Activated CD8-positive, alpha-beta T cell treated with anti-CD3 and anti-CD28 coated beads for 36 hours (primary cell): ENCODE measurements at regions of chr19 and their contacts with region 1.

Region 1: DNA sequence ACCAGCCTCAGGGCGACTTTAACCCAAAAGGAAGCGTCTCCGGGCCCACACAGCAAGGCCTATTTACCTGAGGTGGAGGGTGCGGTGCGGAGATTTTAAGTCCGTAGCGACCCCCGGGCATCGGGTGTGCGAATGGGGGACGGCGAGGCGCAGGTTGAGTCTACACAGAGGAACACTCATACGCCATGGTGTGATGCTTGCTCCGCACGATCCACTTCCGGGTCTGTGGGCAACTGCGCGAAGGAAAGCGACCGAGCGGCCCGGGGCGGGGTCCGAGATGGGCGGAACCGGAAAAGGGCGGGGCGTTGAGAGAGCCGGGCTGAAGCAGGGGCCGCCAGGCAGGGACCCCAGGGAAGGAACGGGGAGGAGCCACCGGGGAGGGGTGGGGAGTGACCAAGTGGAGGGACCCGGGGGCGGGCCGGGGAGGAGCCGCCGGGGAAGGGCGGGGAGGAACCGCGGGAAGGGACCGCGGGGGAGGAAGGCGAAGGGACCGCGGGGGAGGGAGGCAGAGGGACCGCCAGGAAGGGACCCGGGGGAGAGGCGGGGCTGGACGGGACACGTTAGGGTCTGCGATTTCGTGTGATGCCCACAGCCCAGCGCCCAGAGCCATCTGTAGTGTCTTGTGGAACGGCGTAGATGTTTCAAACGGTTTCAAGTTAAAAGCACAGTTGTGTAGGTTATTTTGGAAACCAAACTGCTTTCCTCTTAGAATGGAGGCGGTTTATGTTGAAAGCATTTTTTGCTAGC is at the start of gene ZNF160:
- DNase-seq: peak; percentile 99
- ATAC-seq: peak; percentile 97
- H3K4me3 Mint-ChIP-seq: peak within 1 kb of the TSS; percentile 92
- H3K27ac Mint-ChIP-seq: peak within 1 kb of the TSS; percentile 93
- H3K4me1 Mint-ChIP-seq: peaks cover 27% of the 10 kb centered on the region
- H3K27me3 Mint-ChIP-seq: no peaks in the 10 kb centered on the region
- CTCF ChIP-seq: no peak
- total RNA-seq, gene ZNF160: 48.0 to 50.0 TPM

Region 2: GRCh38 chr19:53045546-53045945 is 57.8 kb before region 1 on chr19:
- CTCF ChIA-PET with region 1: no interaction called
- POLR2A ChIA-PET with region 1: no interaction called
- intact Hi-C with region 1: no loop called
- DNase-seq: no peak
- ATAC-seq: no peak
- H3K4me3 Mint-ChIP-seq: no peak overlapping the region
- H3K27ac Mint-ChIP-seq: no peak overlapping the region
- H3K4me1 Mint-ChIP-seq: no peaks in the 10 kb centered on the region
- H3K27me3 Mint-ChIP-seq: peaks cover 2% of the 10 kb centered on the region
- CTCF ChIP-seq: no peak

Region 3: GRCh38 chr19:53092727-53093126 is 10.6 kb before region 1 on chr19:
- CTCF ChIA-PET with region 1: no interaction called
- POLR2A ChIA-PET with region 1: no interaction called
- intact Hi-C with region 1: no loop called
- DNase-seq: no peak
- ATAC-seq: no peak
- H3K4me3 Mint-ChIP-seq: no peak overlapping the region
- H3K27ac Mint-ChIP-seq: no peak overlapping the region
- H3K4me1 Mint-ChIP-seq: peaks cover 15% of the 10 kb centered on the region
- H3K27me3 Mint-ChIP-seq: no peaks in the 10 kb centered on the region
- CTCF ChIP-seq: no peak

Region 4: DNA sequence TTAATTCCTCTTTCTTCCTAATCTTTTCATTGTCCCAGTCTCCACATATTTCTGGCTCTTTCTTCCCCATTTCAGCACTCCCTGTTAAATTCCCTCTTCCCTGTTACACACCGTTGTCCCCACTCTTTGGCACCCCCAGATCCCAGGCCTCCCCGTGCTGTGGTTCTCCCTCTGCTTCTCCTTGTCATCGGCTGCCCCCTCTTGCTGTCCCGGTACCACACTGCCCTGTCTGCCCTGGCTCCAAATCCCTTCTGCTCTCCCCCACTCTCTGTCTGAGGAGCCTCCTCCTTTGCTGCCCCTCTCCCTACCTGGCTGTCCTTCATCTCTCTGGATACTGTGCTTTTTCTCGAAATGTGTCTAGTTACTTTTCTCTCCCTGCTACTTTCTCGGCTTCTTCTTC is 28.4 kb after region 1 on chr19:
- CTCF ChIA-PET with region 1: no interaction called
- POLR2A ChIA-PET with region 1: no interaction called
- intact Hi-C with region 1: loop called (anchors 2 kb)
- DNase-seq: no peak
- ATAC-seq: no peak
- H3K4me3 Mint-ChIP-seq: peak overlapping the region; percentile 76
- H3K27ac Mint-ChIP-seq: peak overlapping the region; percentile 68
- H3K4me1 Mint-ChIP-seq: peaks cover 12% of the 10 kb centered on the region
- H3K27me3 Mint-ChIP-seq: no peaks in the 10 kb centered on the region
- CTCF ChIP-seq: no peak

Region 5: DNA sequence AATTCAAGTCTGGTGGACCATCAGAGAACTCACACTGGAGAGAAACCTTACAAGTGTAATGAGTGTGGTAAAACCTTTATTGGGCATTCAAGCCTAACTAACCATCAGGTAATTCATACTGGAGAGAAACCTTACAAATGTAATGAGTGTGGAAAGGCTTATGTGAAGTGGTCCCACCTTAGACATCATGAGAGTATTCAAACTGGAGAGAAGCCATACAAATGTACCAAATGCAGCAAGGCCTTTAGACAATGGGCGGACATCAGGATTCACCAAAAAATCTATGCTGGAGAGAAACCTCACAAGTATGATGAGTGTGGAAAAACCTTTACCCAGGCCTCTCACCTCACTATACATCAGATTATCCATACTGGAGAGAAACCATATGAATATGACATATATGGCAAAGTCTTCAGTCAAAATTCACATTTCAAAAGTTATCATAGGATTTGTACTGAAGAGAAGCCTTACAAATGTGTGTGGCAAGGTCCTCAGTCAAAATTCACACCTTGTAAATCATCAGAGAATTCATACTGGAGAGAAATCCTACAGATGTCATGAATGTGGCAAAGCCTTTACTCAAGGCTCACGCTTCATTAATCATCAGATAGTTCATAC is 109.4 kb after region 1 on chr19:
- CTCF ChIA-PET with region 1: no interaction called
- POLR2A ChIA-PET with region 1: no interaction called
- intact Hi-C with region 1: no loop called
- DNase-seq: no peak
- ATAC-seq: no peak
- H3K4me3 Mint-ChIP-seq: no peak overlapping the region
- H3K27ac Mint-ChIP-seq: no peak overlapping the region
- H3K4me1 Mint-ChIP-seq: no peaks in the 10 kb centered on the region
- H3K27me3 Mint-ChIP-seq: no peaks in the 10 kb centered on the region
- CTCF ChIP-seq: no peak